ENCODE measurements at regions of chr14 and their contacts with region 1.

Region 1: GRCh38 chr14:64671591-64671990 is 32.6 kb upstream of the PLEKHG3 start:
- DNase-seq: peak in 1 of 2 experiments; percentile 65
- H3K4me3 ChIP-seq: no peak overlapping the region
- H3K27ac ChIP-seq: no peak overlapping the region
- H3K4me1 ChIP-seq: peaks cover 32% of the 10 kb centered on the region
- H3K27me3 ChIP-seq: no peaks in the 10 kb centered on the region
- CTCF ChIP-seq: peak; percentile 92

Region 2: GRCh38 chr14:64726585-64726890 is 54.9 kb after region 1 on chr14:
- CTCF ChIA-PET with region 1: interaction called, 3 read pairs
- POLR2A ChIA-PET with region 1: interaction called, 5 read pairs
- intact Hi-C with region 1: loop called (anchors 2 kb)
- DNase-seq: peak; percentile 91 to 92
- H3K4me3 ChIP-seq: no peak overlapping the region
- H3K27ac ChIP-seq: peak overlapping the region; percentile 53
- H3K4me1 ChIP-seq: peaks cover 56% of the 10 kb centered on the region
- H3K27me3 ChIP-seq: no peaks in the 10 kb centered on the region
- CTCF ChIP-seq: no peak

Region 3: GRCh38 chr14:64857979-64858744 is 186.6 kb after region 1 on chr14:
- CTCF ChIA-PET with region 1: interaction called, 10 read pairs
- POLR2A ChIA-PET with region 1: interaction called, 4 read pairs
- intact Hi-C with region 1: no loop called
- DNase-seq: no peak
- H3K4me3 ChIP-seq: no peak overlapping the region
- H3K27ac ChIP-seq: no peak overlapping the region
- H3K4me1 ChIP-seq: no peaks in the 10 kb centered on the region
- H3K27me3 ChIP-seq: peaks cover 10% of the 10 kb centered on the region; the same call in 1 of the 2 replicates
- CTCF ChIP-seq: no peak

Region 4: DNA sequence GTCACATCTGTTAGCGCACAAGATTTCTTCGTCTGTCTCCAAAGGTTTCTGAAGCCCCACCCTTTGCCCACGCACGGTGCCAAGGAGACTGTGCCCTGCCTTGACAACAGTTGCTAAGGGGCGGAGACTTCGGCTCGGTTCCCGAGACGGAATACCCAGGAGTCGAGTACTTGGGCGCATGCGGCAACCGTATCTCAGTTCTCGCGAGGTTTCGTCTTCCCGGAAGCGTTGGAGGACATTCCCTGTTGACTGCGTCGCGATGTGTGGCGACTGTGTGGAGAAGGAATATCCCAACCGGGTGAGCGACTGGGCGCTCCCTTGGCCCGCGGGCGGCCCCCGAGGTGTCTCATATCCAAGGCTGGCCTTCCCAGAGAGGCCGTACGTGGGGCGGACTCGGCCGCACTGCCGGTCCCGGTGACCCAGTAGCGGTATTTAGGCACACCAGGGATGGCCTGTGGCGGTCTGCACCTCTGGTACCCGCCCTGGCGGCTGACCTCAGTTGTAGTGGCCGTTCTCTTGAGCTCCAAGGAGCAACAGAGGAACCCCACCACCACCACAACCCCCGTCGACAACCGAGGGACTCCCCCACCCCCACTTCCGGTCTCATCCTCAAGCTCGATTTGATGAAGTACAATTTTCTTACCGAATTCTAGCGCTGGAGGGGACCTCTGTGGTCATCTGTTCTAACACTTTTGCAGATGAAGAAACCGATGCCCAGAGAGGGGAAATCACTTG is 242.8 kb after region 1 on chr14 and contains the start of gene CHURC1:
- CTCF ChIA-PET with region 1: interaction called, 11 read pairs
- POLR2A ChIA-PET with region 1: interaction called, 4 read pairs
- intact Hi-C with region 1: loop called (anchors 5 kb)
- DNase-seq: peak; percentile 98 to 100
- H3K4me3 ChIP-seq: peak within 1 kb of the TSS; percentile 70
- H3K27ac ChIP-seq: peak within 1 kb of the TSS; percentile 62
- H3K4me1 ChIP-seq: peaks cover 20% of the 10 kb centered on the region
- H3K27me3 ChIP-seq: no peaks in the 10 kb centered on the region
- CTCF ChIP-seq: no peak
- total RNA-seq, gene CHURC1: 88.1 and 91.8 TPM in 2 replicates

Region 5: DNA sequence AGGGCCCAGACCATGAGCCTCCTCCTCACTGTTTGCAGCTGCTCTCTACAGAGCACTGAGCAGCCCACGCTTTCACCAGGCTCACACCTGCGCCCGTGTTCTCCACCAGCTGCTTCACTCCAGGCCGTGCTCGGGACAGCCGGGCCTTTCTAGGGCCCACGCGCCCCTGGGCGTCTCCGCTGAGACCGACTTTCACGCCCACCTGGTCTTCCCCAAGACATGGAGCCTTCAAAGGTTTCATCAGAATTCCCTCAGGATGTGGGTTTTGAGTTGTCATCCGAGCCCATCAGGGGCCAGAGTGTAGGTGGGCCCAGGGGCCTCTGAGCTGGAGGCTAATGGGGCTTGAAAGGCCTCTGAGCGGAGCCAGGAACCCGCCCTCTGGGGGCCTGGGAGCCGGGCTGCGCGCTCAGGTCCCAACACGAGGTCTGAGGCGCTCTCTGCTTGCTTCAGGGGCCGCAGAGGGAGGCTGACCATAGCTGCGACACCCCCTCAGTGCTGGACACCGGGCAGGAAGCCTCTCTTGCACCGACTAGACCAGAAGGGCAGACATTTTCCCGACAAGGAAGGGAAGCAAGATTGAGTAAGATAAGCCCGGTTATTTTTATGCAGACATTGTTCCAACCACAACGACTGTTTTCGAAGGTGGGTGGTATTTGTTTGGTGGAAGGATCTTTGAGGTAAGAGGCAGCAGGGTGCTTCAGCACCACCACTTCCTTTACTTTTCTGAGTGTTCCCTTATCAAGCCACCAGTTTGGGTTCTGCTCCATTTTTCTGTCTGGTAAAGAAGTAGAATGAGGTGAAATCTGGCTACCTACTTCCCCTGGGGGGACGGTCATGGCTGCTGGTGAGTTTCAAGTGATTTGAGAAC is 615.9 kb after region 1 on chr14:
- CTCF ChIA-PET with region 1: no interaction called
- POLR2A ChIA-PET with region 1: interaction called, 12 read pairs
- intact Hi-C with region 1: no loop called
- DNase-seq: no peak
- H3K4me3 ChIP-seq: no peak overlapping the region
- H3K27ac ChIP-seq: no peak overlapping the region
- H3K4me1 ChIP-seq: peaks cover 29% of the 10 kb centered on the region
- H3K27me3 ChIP-seq: no peaks in the 10 kb centered on the region
- CTCF ChIP-seq: no peak

Measured in PC-9 (cell line).